ENCODE measurements at regions of chr4 and their contacts with region 1.

Region 1: DNA sequence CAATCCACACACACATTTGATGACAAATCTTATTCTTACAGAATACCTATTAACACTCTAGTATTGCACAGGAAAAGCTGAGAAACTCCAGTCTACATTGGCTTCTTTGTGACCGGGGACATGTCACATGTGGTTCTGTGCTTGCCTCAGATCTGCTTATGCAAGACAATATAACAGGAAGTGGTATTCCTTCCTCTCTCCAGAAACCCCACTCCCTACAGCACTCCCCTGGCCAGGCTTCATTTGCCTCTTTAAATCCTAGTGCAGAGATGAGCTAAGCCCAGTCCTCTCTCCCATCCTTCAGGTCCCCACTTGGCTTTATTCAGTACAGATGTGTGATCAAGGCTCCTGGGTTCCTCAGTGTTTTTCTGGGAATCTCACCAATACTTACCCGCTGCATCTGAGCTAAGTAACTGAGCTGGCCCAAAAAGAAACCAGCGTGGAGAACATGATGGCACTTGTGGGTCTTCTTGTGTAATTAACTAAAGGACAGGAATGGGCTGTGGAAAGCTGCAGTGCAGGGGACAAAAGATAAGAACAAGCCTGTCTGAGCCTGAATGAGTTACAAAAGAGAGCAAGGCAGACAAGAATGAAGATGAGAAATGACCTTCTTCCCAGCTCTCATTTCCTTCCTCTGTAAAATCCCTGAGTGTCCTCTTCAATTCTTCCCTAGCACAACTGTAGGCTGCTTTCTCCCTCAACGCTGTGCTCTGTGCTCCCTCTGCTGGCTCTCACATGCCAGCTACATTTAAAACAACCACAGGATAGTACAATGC is 105.6 kb downstream of the HNRNPD start:
- DNase-seq: no peak
- H3K4me3 ChIP-seq: no peak overlapping the region
- CTCF ChIP-seq: peak; percentile 84

Region 2: DNA sequence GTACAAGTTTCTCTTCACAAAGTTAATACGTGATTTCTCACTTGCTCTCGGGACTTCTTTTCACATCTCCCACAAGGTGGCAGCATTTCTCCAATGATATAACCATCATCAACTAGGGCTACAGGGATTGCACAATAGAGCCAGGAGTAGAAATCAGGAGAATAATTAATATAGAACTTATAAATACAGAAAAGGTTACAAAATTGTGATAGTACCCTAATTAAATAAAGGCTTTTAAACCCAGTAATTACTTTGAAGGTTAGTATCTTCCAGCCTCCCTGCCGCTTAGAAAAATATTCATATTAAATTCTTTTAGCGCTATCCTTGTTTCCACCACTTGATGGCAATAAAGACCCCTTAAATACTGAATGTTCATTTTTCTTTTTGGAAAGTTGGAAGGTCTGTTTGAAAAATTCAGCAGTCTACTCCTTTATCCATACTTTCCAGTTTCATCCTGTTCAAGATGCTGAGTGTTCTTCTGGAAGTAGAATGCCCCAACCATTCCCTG is 862.3 kb before region 1 on chr4:
- CTCF ChIA-PET with region 1: interaction called, 19 read pairs
- POLR2A ChIA-PET with region 1: no interaction called
- DNase-seq: peak; percentile 19
- H3K4me3 ChIP-seq: no peak overlapping the region
- CTCF ChIP-seq: peak; percentile 56

Region 3: GRCh38 chr4:81466841-81467671 is 801.2 kb before region 1 on chr4:
- CTCF ChIA-PET with region 1: interaction called, 57 read pairs
- POLR2A ChIA-PET with region 1: no interaction called
- DNase-seq: peak; percentile 33
- H3K4me3 ChIP-seq: no peak overlapping the region
- CTCF ChIP-seq: peak; percentile 82

Region 4: GRCh38 chr4:81997313-81997712 is 270.9 kb before region 1 on chr4:
- CTCF ChIA-PET with region 1: no interaction called
- POLR2A ChIA-PET with region 1: no interaction called
- DNase-seq: no peak
- H3K4me3 ChIP-seq: no peak overlapping the region
- CTCF ChIP-seq: no peak

Region 5: GRCh38 chr4:82284858-82285805 is 16.9 kb after region 1 on chr4:
- CTCF ChIA-PET with region 1: interaction called, 29 read pairs
- POLR2A ChIA-PET with region 1: no interaction called
- DNase-seq: peak; percentile 96
- H3K4me3 ChIP-seq: peak overlapping the region; percentile 57
- CTCF ChIP-seq: peak; percentile 88

Measured in AG04449 (cell line).